MCF 10A (cell line): ENCODE measurements at regions of chr20 and their contacts with region 1.

Region 1: GRCh38 chr20:4053071-4053919 is 37.9 kb upstream of the RNF24 start:
- DNase-seq: peak; percentile 69
- H3K4me3 Mint-ChIP-seq: no peak overlapping the region
- H3K27ac Mint-ChIP-seq: no peak overlapping the region
- H3K4me1 Mint-ChIP-seq: peaks cover 18% of the 10 kb centered on the region
- H3K27me3 Mint-ChIP-seq: no peaks in the 10 kb centered on the region
- CTCF ChIP-seq: no peak

Region 2: GRCh38 chr20:3590164-3590563 is 463.1 kb before region 1 on chr20:
- CTCF ChIA-PET with region 1: no interaction called
- POLR2A ChIA-PET with region 1: no interaction called
- intact Hi-C with region 1: no loop called
- DNase-seq: no peak
- H3K4me3 Mint-ChIP-seq: no peak overlapping the region
- H3K27ac Mint-ChIP-seq: no peak overlapping the region
- H3K4me1 Mint-ChIP-seq: no peaks in the 10 kb centered on the region
- H3K27me3 Mint-ChIP-seq: no peaks in the 10 kb centered on the region
- CTCF ChIP-seq: no peak

Region 3: GRCh38 chr20:4026093-4026601 is 27.1 kb before region 1 on chr20:
- CTCF ChIA-PET with region 1: interaction called, 3 read pairs
- POLR2A ChIA-PET with region 1: interaction called, 10 read pairs
- intact Hi-C with region 1: no loop called
- DNase-seq: peak; percentile 79
- H3K4me3 Mint-ChIP-seq: no peak overlapping the region
- H3K27ac Mint-ChIP-seq: peak overlapping the region; percentile 17
- H3K4me1 Mint-ChIP-seq: peaks cover 32% of the 10 kb centered on the region
- H3K27me3 Mint-ChIP-seq: no peaks in the 10 kb centered on the region
- CTCF ChIP-seq: peak; percentile 11

Region 4: GRCh38 chr20:4180356-4180755 is 127.1 kb after region 1 on chr20:
- CTCF ChIA-PET with region 1: no interaction called
- POLR2A ChIA-PET with region 1: no interaction called
- intact Hi-C with region 1: no loop called
- DNase-seq: no peak
- H3K4me3 Mint-ChIP-seq: no peak overlapping the region
- H3K27ac Mint-ChIP-seq: no peak overlapping the region
- H3K4me1 Mint-ChIP-seq: no peaks in the 10 kb centered on the region
- H3K27me3 Mint-ChIP-seq: no peaks in the 10 kb centered on the region
- CTCF ChIP-seq: no peak